ENCODE measurements at regions of chr1 and their contacts with region 1.

Region 1: DNA sequence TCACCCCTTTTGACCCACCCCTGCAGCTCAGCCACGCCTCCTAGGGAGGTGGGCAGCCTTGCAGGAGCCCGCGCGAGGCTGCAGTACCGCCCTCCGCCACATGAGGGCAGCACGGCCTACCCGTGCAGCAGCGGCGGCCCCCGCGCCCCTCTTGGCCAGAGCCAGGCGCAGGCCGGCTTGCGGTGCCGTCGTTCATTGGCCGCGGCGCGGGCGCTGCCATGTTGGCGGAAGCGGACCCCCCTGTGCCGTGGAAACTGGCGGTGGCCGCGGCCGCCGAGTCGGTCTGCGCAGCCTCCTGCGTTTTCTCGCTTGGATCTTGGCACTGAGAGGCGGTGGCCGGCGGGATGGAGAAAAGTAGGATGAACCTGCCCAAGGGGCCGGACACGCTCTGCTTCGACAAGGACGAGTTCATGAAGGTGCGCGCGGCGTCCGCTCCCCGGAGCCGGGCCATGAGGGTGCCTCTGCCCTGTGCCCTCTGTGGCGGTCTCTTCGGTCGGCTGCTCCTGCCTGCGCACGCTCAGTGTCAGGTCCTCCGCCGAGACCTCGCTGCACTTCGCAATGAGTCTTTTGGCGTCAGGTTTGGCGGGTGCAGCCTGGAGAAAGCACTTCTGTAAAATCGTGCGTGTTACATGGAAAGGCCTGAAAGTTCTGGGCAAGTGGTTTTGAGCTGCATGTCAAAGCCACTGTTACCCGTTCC is at the start of gene COG2:
- DNase-seq: peak; percentile 58 to 97
- H3K4me3 ChIP-seq: peak within 1 kb of the TSS; percentile 89 to 90
- H3K27ac ChIP-seq: peak within 1 kb of the TSS; percentile 80 to 91
- H3K4me1 ChIP-seq: peaks cover 8 to 11% of the 10 kb centered on the region in 2 donors
- H3K27me3 ChIP-seq: no peaks in the 10 kb centered on the region
- CTCF ChIP-seq: peak; percentile 99 to 100 (median 100)
- total RNA-seq, gene COG2: 8.4 TPM

Region 2: DNA sequence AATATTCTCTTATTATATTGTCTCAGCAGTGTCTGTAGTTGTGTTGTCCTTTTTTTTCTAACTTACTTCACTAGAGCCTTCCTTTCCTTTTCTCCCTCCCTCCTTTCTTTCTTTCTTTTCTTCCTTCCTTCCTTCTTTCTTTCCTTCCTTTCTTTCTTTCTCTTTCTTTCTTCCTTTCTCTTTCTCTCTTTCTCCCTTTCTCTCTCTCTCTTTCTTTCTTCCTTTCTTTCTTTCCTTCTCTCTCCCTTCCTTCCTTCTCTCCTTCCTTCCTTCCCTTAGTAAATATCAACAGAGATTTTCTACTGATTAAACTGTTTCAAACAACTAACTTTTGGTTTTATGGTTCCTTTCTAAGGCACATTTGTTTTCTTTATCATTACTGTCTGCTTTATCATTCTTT is 173.1 kb before region 1 on chr1:
- intact Hi-C with region 1: no loop called
- DNase-seq: no peak
- H3K4me3 ChIP-seq: no peak overlapping the region
- H3K27ac ChIP-seq: no peak overlapping the region
- H3K4me1 ChIP-seq: no peaks in the 10 kb centered on the region
- H3K27me3 ChIP-seq: no peaks in the 10 kb centered on the region
- CTCF ChIP-seq: no peak

Region 3: DNA sequence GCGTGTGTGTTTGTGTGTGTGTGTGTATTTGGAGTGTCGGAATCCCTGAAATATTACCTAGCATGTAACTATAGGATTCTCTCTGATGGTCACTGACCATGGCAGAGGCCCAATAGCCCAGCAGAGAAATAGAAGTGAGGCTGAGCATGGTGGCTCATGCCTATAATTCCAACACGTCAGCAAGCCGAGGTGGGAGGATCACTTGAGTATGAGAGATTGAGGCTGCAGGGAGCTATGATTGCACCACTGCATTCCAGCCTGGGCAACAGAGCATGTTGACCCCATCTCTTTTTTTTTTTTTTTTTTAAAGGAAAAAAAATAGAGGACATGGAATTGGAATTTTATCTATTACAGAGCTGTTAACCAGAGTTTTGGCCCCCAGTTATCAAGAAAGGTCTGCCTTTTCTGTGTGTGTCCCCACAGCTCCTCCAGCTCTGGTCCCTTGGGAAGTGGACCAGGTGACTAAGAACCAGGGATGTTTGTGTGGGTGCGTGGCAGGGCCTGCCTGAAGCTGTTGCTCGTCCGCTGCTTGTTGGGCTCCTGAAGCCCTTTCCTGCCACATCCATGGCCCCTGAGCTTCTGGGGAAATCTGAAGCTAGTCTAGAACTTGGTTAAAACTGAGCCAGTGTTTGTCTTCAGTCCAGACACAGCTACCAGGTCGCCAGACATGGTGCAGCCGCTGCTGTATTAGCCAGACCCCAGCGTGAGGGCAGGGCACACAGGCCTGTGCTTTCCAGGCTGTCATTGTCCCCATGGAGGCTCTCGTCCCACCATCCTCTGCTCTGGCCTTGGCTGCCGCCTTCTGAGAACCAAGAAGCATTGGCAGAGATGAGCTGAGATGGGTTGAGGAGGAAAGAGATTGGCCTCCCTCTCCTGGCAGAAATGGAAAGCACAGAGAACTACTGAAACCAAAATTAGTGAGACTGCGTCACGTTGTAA is 130.3 kb after region 1 on chr1:
- intact Hi-C with region 1: loop called (anchors 10 kb)
- DNase-seq: no peak
- H3K4me3 ChIP-seq: no peak overlapping the region
- H3K27ac ChIP-seq: no peak overlapping the region
- H3K4me1 ChIP-seq: no peaks in the 10 kb centered on the region
- H3K27me3 ChIP-seq: no peaks in the 10 kb centered on the region
- CTCF ChIP-seq: peak in 2 of 3 experiments; percentile 36 to 47

Region 4: DNA sequence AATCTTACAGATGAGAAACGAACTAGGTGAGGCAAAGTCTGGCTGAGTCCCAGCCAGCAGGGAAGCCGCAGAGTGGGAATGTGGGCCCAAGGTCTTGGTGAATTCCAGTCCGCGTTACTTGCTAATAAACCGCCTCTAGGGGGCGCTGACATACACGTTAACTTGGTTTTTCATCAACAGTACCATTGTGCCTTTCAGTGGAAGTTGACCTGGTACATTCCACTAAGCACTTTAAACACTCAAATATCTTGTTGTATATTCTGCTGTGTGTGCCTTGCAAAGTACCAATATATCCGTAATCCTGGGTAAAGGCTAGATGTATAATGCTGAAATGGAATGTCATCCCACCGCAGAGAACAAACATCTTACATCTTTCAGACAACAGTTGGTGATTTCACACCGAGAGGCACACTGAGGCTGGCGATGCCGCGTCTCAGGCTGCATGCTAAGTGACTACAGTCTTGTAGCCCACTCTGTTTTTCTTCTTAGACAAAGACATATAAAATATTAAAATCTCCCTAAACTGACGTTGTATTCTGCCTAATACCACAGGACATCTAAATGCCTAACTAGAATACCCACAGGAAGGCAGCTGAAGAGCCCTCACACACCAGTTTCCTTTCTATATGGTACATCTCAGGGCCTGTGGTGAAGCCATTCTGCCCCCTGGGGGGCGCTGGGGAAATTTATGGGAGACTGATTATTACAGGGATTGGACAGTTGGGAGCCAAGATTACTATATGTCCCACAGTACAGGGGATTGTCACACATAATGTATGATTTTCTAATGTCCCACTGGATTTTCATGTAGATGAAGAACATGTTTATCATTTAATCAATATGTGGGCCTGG is 275.1 kb after region 1 on chr1:
- intact Hi-C with region 1: loop called (anchors 10 kb)
- DNase-seq: peak in 1 of 2 donors; percentile 87
- H3K4me3 ChIP-seq: no peak overlapping the region
- H3K27ac ChIP-seq: no peak overlapping the region
- H3K4me1 ChIP-seq: peaks cover 0 to 5% of the 10 kb centered on the region in 2 donors
- H3K27me3 ChIP-seq: no peaks in the 10 kb centered on the region
- CTCF ChIP-seq: peak; percentile 58 to 62 (median 62)

Region 5: DNA sequence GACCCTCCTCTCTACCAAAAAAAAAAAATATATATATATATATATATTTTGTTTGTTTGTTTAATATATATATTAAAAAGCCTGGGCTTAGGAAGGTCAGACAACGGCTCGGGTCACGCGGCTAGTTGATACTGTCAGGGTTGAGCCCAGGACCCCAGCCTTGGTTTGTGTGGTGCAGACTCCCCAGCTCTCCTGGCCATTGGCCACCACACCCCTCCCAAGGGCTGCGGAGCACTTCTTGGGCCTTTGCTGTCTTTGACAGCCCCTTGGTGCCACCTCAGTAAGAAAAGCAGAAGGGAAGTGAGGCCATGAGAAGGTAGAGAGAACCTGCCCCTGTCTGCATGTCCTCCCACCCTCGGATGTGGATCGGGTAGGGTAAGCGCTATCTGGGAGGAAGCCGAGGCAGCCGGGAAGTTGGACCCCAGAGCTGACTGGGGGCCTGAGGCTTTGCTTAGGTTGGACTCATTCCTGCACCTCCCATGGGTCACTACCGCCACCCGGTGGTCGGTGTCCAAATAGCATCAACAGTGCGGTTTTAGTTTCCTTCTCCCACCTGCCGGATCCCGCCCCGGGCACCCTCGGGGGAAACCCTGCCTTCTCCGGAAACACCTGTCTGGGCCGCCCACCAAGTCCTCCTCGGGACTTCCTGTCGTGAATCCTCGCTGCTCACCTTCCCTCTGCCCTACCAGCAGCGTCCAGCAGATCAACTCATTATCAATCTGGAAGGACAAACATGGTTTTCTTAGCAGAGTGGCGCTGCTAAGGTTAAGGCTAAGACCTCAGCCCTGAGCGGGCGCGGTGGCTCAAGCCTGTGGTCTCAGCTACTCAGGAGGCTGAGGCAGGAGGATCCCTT is 568.8 kb after region 1 on chr1:
- intact Hi-C with region 1: loop called (anchors 10 kb)
- DNase-seq: peak; percentile 12 to 85
- H3K4me3 ChIP-seq: peak overlapping the region in 1 of 2 donors; percentile 59
- H3K27ac ChIP-seq: no peak overlapping the region
- H3K4me1 ChIP-seq: no peaks in the 10 kb centered on the region
- H3K27me3 ChIP-seq: no peaks in the 10 kb centered on the region
- CTCF ChIP-seq: peak; percentile 70 to 96 (median 84)

Region 6: DNA sequence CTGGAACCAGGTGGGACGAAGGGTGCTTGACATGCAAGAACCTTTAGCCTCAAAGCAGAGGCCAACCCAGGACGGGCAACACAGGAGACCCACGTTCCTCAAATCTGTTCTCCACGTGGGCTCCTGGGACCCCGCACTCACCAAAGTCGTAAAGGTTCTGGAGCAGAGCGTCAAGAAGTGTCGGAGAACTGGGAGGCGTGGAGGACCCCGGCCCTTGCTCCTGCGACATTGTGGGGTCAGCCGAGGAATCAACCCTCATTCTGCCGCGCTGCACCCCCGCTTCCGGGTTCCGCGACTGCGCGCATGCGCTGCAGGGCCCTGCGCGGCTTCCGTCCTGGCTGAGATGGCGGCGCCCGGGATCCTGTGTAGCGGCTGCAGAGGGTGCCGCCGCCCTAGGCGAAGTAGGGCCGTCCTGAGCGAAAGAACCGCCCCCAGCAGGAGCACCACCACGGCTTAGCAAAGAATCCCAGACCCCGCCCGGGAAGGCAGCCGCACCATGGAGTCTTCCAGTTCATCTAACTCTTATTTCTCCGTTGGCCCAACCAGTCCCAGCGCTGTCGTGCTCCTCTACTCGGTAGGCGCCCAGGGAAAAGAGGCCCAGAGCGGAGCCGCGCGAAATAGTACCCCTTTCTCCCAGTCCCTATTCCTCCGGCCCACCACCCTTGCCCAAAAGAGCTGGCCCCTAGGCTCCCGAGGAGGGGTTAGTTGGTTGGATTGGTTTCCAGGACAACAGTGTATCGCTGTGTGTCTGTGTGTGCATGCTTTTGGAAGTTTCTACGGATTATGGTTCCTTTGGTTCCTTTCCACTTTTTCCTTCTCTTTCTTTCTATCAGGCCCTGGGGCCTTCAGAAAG is 598.7 kb after region 1 on chr1 and contains the start of gene GNPAT:
- intact Hi-C with region 1: loop called (anchors 10 kb)
- DNase-seq: peak; percentile 23 to 92
- H3K4me3 ChIP-seq: peak within 1 kb of the TSS; percentile 85 to 90
- H3K27ac ChIP-seq: peak within 1 kb of the TSS; percentile 82 to 84
- H3K4me1 ChIP-seq: peaks cover 0 to 18% of the 10 kb centered on the region in 2 donors
- H3K27me3 ChIP-seq: no peaks in the 10 kb centered on the region
- CTCF ChIP-seq: no peak
- total RNA-seq, gene GNPAT: 34.8 TPM

Measured in ascending aorta (tissue), 2 donors.